A673 (cell line): ENCODE measurements at regions of chr11 and their contacts with region 1.

Region 1: GRCh38 chr11:83819933-83820549 is 533.9 kb upstream of the CCDC90B start:
- DNase-seq: peak; percentile 90
- H3K4me3 ChIP-seq: no peak overlapping the region
- H3K27ac ChIP-seq: peak overlapping the region; percentile 39
- H3K4me1 ChIP-seq: peaks cover 38% of the 10 kb centered on the region
- H3K27me3 ChIP-seq: no peaks in the 10 kb centered on the region
- CTCF ChIP-seq: peak; percentile 87

Region 2: GRCh38 chr11:82867495-82868082 is 952.5 kb before region 1 on chr11:
- CTCF ChIA-PET with region 1: interaction called, 8 read pairs
- POLR2A ChIA-PET with region 1: no interaction called
- intact Hi-C with region 1: loop called (anchors 1 kb)
- DNase-seq: peak; percentile 92
- H3K4me3 ChIP-seq: no peak overlapping the region
- H3K27ac ChIP-seq: no peak overlapping the region
- H3K4me1 ChIP-seq: peaks cover 9% of the 10 kb centered on the region
- H3K27me3 ChIP-seq: no peaks in the 10 kb centered on the region
- CTCF ChIP-seq: peak; percentile 86

Region 3: GRCh38 chr11:83087035-83087434 is 733.0 kb before region 1 on chr11:
- CTCF ChIA-PET with region 1: no interaction called
- POLR2A ChIA-PET with region 1: no interaction called
- intact Hi-C with region 1: loop called (anchors 10 kb)
- DNase-seq: peak; percentile 23
- H3K4me3 ChIP-seq: no peak overlapping the region
- H3K27ac ChIP-seq: no peak overlapping the region
- H3K4me1 ChIP-seq: no peaks in the 10 kb centered on the region
- H3K27me3 ChIP-seq: no peaks in the 10 kb centered on the region
- CTCF ChIP-seq: peak; percentile 31; the same call in 1 of the 2 replicates

Region 4: GRCh38 chr11:83241291-83241946 is 578.6 kb before region 1 on chr11:
- CTCF ChIA-PET with region 1: interaction called, 4 read pairs
- POLR2A ChIA-PET with region 1: no interaction called
- intact Hi-C with region 1: loop called (anchors 1 kb)
- DNase-seq: peak; percentile 74
- H3K4me3 ChIP-seq: no peak overlapping the region
- H3K27ac ChIP-seq: no peak overlapping the region
- H3K4me1 ChIP-seq: peaks cover 10% of the 10 kb centered on the region
- H3K27me3 ChIP-seq: no peaks in the 10 kb centered on the region
- CTCF ChIP-seq: peak; percentile 85

Region 5: DNA sequence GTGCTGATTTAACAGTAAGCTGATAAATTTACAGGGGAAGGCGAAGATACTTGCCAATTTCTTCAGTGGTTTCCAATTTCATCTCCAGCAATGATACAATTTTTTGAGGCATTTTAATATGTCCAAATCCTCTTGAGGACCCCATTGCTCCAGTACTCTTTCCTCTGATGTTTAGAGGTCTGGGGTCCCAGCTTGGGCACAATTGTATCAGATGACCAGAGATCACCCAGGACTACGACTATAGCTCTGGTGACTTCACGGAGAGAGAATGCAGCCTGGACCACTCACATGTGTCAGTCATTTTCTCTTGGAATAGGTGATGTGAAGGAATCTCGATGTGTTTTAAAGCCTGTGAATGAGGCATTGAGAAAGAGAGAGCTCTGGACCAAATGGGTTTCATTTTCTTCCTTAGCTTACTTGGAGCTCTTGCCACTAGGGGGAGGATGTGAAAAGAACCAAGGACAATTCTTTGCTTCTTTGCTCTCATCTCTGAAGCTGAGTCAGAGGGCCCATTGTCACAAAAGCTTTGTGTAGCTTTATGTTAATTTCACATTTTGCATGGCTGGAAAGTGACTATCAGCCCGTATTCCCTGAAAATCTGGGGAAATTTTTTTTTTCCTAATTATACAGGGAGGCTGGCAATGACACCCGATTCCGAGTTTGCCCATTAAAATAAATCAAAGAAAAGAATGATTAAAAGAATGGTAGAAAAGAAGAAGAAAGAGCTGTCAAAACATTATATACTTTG is 527.2 kb before region 1 on chr11:
- CTCF ChIA-PET with region 1: interaction called, 10 read pairs
- POLR2A ChIA-PET with region 1: interaction called, 4 read pairs
- intact Hi-C with region 1: loop called (anchors 5 kb)
- DNase-seq: peak; percentile 95
- H3K4me3 ChIP-seq: peak overlapping the region; percentile 30
- H3K27ac ChIP-seq: peak overlapping the region; percentile 10
- H3K4me1 ChIP-seq: peaks cover 14% of the 10 kb centered on the region
- H3K27me3 ChIP-seq: no peaks in the 10 kb centered on the region
- CTCF ChIP-seq: peak; percentile 91

Region 6: DNA sequence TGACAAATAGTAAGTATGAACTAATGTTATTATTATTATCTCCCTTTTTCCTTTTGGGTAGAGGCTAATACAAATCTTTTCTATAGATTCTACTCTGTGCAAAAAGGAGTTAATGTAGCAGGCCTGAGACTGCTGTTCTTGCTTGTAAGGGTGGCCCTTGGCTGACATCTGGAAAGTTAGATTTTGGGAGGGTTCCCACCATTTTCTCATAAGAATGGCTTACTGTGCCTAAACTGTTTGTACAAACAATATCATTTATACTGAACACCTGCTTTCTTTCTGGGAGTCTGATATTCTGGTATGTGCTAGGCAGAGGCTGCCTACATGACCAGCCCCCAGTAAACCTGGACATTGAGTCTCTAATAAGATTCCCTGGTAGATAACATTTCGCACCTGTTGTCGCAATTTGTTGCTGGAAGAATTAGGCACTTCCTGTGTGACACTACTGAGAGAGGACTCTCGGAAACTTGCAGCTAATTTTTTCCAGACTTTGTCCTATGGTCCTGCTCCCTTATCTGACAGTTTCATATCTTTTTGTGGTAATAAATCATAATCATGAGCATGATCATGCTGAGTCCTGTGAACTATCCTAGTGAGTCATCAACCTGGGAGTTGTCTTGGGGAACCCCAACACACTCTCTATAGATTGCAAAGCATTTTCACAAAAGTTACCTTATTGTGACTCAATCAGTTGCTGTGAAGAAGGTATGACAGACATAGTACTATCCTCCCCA is 276.2 kb before region 1 on chr11:
- CTCF ChIA-PET with region 1: no interaction called
- POLR2A ChIA-PET with region 1: no interaction called
- intact Hi-C with region 1: loop called (anchors 10 kb)
- DNase-seq: no peak
- H3K4me3 ChIP-seq: no peak overlapping the region
- H3K27ac ChIP-seq: peak overlapping the region; percentile 8
- H3K4me1 ChIP-seq: peaks cover 75% of the 10 kb centered on the region
- H3K27me3 ChIP-seq: no peaks in the 10 kb centered on the region
- CTCF ChIP-seq: no peak

Region 7: DNA sequence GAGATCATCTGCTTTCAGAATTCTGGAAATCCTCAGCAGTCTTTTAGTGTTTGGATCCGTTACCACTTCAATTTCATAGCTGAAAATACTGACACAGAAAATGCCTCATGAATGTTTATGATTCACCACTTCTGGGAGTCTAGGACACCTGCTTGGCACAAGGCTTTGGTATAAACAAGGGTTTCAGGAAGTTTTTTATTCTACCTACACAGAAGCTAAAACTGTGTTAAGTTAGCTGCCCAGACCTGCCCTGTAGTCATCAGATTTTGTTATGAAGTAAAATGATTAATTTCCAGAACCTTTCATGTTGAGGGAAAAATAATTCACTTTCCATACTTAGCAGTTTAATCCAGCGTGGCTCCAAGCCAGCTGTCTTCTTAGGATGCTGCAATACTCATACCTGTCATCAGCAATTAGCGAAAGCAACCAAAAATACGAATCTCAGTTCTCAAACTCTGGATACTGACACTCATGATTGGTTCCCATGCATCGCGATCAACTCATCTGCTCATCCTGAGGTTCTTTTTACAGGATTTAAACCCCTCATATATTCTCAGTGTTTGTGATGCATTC is 75.3 kb before region 1 on chr11:
- CTCF ChIA-PET with region 1: interaction called, 5 read pairs
- POLR2A ChIA-PET with region 1: interaction called, 8 read pairs
- intact Hi-C with region 1: loop called (anchors 1 kb)
- DNase-seq: peak; percentile 48
- H3K4me3 ChIP-seq: no peak overlapping the region
- H3K27ac ChIP-seq: peak overlapping the region; percentile 78
- H3K4me1 ChIP-seq: peaks cover 18% of the 10 kb centered on the region
- H3K27me3 ChIP-seq: no peaks in the 10 kb centered on the region
- CTCF ChIP-seq: no peak

Region 8: GRCh38 chr11:85137597-85137996 is 1317.6 kb after region 1 on chr11:
- CTCF ChIA-PET with region 1: no interaction called
- POLR2A ChIA-PET with region 1: no interaction called
- intact Hi-C with region 1: no loop called
- DNase-seq: no peak
- H3K4me3 ChIP-seq: no peak overlapping the region
- H3K27ac ChIP-seq: no peak overlapping the region
- H3K4me1 ChIP-seq: no peaks in the 10 kb centered on the region
- H3K27me3 ChIP-seq: peaks cover 10% of the 10 kb centered on the region
- CTCF ChIP-seq: no peak